ENCODE measurements at regions of chr3 and their contacts with region 1.

Region 1: GRCh38 chr3:197088370-197088769 is 58.8 kb upstream of the MELTF start:
- DNase-seq: peak; percentile 4
- H3K4me3 ChIP-seq: no peak overlapping the region
- H3K27ac ChIP-seq: no peak overlapping the region
- H3K4me1 ChIP-seq: peaks cover 7% of the 10 kb centered on the region
- CTCF ChIP-seq: no peak

Region 2: DNA sequence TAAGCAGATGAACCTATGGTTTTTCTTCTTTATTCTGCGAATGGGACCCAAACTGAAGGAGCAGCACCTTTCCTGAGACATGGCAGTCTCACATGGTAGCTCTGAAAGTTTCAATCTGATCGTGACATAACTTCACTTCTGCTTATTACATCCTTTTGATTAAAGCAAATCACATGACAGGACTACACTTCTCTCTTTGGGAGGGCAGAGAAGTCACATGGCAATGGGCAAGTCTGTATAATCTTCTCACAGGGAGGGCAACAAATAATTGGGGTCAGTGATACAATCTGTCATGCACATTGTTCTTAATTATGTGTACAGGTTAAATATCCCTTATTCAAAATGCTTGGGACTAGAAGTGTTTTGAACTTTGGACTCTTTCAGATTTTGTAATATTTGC is 167.6 kb before region 1 on chr3:
- CTCF ChIA-PET with region 1: no interaction called
- POLR2A ChIA-PET with region 1: no interaction called
- intact Hi-C with region 1: no loop called
- DNase-seq: no peak
- H3K4me3 ChIP-seq: no peak overlapping the region
- H3K27ac ChIP-seq: no peak overlapping the region
- H3K4me1 ChIP-seq: peaks cover 5% of the 10 kb centered on the region
- CTCF ChIP-seq: no peak

Region 3: DNA sequence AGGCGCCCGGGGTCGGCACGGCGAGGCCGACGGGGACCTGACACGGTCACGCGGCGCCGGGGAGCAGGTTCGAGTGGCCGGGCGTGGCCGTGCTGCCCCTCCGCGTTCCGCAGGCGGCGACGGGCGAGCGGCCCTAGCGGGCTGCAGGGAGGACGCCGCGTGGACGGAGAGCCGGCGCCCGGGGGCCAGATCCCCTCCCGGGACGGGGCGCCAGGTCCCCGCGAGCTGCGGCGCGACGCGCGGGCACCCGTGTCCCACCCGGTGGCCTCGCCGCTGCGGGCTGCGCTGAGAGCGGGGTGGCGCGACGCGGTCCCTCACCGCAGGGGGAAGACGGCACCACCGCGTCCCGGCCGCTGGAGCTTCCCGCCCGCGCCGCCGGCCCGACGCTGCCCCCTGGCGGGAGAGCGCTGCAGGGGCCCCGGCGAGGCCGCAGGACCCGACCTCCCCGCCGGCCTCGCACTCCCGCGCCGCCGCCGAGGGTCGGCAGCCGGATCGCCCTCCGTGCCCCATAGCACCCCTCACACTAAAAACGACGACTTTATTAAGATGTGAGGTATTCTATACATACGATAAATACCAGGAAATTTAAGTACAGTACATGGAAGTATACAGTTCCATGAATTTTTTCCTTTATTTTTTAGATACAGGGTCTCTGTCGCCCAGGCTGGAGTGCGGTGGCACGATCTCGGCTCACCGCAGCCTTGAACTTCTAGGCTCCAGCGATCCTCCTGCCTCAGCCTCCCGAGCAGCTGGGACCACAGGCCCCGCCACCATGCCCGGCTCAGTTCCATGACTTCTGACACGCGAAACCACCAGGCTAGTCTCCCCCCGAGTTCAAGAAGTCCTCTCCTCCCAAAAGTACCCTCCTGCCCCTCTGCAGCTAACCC is 118.5 kb before region 1 on chr3:
- CTCF ChIA-PET with region 1: no interaction called
- POLR2A ChIA-PET with region 1: no interaction called
- intact Hi-C with region 1: no loop called
- DNase-seq: peak; percentile 73
- H3K4me3 ChIP-seq: peak overlapping the region; percentile 72
- H3K27ac ChIP-seq: no peak overlapping the region
- H3K4me1 ChIP-seq: peaks cover 8% of the 10 kb centered on the region
- CTCF ChIP-seq: peak; percentile 77

Region 4: DNA sequence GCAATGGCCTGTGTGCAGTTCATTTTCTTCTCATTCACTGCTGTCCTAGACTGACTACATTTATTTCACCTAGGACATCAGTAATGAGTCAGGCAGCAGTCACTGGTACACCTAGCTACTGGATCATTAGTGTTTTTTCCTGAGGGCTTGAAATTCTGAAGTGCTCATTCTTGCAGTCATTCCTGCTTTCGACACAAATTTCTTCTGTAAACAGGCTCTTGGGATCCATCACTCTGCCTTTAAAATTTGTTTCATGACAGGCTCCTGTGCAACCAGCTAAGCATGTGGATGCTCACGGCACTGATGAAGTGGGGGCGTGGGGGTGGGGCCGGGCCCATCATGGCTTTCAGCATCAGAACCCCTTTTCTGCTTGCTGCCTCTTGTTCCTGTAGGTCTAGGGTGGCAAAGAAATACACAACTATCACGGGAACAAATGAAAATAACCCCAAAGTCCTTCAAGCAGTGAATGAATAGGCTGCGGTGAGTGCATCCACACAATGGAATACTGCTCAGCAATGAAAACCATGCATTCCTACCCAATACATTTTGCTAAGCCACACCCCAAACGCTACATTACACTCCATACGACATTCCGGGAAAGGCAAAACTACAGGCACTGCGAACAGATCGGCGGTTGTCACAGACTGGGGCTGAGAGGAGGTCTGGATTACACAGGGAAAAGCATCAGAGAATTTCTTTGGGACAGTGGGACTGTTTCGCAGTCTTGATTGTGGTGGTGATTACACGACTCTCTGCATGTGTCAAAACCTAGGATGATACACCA is 49.5 kb before region 1 on chr3:
- CTCF ChIA-PET with region 1: no interaction called
- POLR2A ChIA-PET with region 1: no interaction called
- intact Hi-C with region 1: no loop called
- DNase-seq: no peak
- H3K4me3 ChIP-seq: no peak overlapping the region
- H3K27ac ChIP-seq: no peak overlapping the region
- H3K4me1 ChIP-seq: no peaks in the 10 kb centered on the region
- CTCF ChIP-seq: no peak

Region 5: DNA sequence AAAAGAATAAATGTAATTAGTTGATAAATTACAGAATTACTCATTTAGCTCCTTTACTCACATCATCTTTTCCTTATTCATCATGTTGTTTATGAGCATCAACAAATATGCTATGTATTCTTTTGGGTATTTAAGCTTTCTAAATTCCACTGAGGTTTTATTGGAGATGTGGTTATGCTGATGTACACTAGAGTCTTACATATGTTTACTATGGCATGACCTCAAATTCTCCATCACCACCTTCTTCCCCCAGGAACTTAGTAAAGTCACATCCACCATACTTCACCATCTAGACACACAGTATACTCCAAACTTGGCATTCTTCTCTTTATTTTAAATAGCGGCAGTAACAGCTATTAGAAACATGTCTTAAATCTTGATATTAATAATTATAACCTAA is 15.4 kb after region 1 on chr3:
- CTCF ChIA-PET with region 1: no interaction called
- POLR2A ChIA-PET with region 1: interaction called, 12 read pairs
- intact Hi-C with region 1: no loop called
- DNase-seq: no peak
- H3K4me3 ChIP-seq: no peak overlapping the region
- H3K27ac ChIP-seq: no peak overlapping the region
- H3K4me1 ChIP-seq: no peaks in the 10 kb centered on the region
- CTCF ChIP-seq: no peak

Region 6: DNA sequence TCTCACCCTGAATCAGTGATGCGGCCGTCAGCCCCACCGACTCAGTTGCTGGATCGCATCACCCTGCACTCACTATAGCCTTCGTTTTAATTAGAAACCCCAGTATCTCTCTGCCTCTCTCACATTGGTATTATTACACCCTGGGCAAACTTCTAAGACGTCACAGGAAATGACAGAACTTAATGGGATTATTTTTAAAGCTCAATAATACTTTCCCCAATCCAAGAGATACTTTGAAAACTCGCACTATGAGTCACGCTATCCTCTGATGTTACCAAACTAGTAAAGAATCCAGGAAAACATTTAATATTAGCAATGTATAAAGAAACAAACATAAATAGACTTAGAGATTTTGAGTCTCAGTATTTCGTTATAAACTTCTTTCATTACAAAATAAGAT is 611.7 kb after region 1 on chr3:
- CTCF ChIA-PET with region 1: no interaction called
- POLR2A ChIA-PET with region 1: no interaction called
- intact Hi-C with region 1: no loop called
- DNase-seq: no peak
- H3K4me3 ChIP-seq: no peak overlapping the region
- H3K27ac ChIP-seq: no peak overlapping the region
- H3K4me1 ChIP-seq: no peaks in the 10 kb centered on the region
- CTCF ChIP-seq: no peak

Measured in OCI-LY7 (cell line).